ENCODE measurements at regions of chr15 and their contacts with region 1.

Region 1: DNA sequence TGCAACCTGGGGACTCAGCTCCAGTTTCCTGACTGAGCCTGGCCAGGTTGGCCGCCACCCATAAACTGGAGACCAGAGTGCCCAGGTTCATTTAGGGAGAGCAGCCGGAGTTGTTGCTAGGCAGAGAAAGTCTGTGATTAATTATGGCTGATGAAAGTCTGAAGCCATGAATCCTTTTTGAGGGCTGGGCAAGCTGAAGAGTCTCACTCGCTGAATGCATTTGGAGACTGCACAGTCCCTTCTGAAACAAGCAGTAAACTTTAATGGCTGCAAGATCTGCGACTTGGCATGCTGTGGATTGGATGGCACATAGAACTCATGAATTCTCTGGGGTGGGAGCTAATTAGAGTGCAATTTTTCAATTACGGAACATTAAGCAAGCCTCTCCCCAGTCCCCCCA is 282.1 kb downstream of the RPLP1 start:
- DNase-seq: no peak
- H3K4me3 ChIP-seq: no peak overlapping the region
- H3K27ac ChIP-seq: no peak overlapping the region
- H3K4me1 ChIP-seq: peaks cover 19% of the 10 kb centered on the region
- H3K27me3 ChIP-seq: no peaks in the 10 kb centered on the region
- CTCF ChIP-seq: no peak

Region 2: DNA sequence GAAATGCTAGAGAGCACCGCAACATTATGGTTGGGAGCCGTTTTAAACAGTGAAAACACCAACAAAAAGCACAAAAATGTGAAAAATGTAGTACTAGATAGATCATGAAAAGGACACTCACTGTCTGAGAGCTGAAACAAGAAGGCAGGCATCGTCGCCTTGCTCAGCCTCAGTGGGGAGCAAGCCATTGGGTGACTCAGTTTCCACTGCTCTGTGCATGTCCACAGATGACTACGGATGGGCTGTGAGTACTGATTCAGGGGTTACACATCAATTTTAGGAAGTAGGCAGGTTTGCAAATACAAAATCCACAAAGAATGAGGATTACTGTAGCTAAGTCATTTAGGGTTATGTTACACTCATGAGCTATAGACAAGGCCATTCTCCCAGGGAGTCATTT is 709.4 kb before region 1 on chr15:
- CTCF ChIA-PET with region 1: no interaction called
- POLR2A ChIA-PET with region 1: interaction called, 10 read pairs
- intact Hi-C with region 1: no loop called
- DNase-seq: no peak
- H3K4me3 ChIP-seq: no peak overlapping the region
- H3K27ac ChIP-seq: no peak overlapping the region
- H3K4me1 ChIP-seq: no peaks in the 10 kb centered on the region
- H3K27me3 ChIP-seq: no peaks in the 10 kb centered on the region
- CTCF ChIP-seq: no peak

Region 3: DNA sequence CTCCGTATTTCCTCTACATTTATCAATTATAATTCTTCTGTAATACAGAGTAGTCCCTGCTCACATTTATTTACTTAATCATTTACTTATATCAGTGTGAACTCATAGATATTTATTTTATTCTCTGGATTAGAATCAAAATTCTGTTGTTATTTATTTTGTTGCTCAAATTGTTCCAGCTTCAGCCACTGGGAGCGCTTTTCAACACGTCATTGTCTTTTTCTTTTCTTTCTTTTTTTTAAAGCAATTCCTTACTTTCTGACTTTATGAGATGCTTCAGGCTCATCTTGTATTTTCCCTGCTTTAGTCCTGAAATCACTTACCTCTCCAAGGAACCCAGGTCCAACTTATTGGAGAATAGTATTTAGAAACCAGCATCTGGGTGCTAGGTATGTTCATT is 520.9 kb before region 1 on chr15:
- CTCF ChIA-PET with region 1: no interaction called
- POLR2A ChIA-PET with region 1: no interaction called
- intact Hi-C with region 1: no loop called
- DNase-seq: no peak
- H3K4me3 ChIP-seq: no peak overlapping the region
- H3K27ac ChIP-seq: no peak overlapping the region
- H3K4me1 ChIP-seq: no peaks in the 10 kb centered on the region
- H3K27me3 ChIP-seq: no peaks in the 10 kb centered on the region
- CTCF ChIP-seq: no peak; the same call in 1 of the 2 replicates

Region 4: DNA sequence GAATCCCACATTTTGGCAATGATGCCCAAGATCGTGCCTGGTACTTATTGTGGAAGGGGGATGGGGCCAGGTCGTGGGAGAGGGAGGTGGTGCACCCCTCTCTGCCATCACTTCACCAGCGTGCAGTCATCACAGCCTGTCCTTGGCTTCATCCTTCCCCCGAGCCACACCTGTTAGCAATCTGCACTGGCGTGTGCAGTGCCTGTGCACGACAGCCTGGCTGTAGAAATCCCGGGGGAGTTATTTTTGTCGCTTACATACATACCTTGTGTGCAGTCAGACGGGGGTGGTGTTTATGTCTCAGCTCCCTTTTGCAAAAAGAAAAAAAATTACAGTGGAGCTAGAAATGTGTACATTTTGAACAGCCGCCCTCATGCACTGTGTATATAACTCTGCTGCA is 147.1 kb after region 1 on chr15:
- CTCF ChIA-PET with region 1: no interaction called
- POLR2A ChIA-PET with region 1: no interaction called
- intact Hi-C with region 1: no loop called
- DNase-seq: no peak
- H3K4me3 ChIP-seq: no peak overlapping the region
- H3K27ac ChIP-seq: no peak overlapping the region
- H3K4me1 ChIP-seq: 0 out of 2 replicates have a peak, but pooled peaks cover 8% of the 10 kb centered on the region
- H3K27me3 ChIP-seq: no peaks in the 10 kb centered on the region
- CTCF ChIP-seq: no peak